Left ventricle myocardium superior (tissue), 1 donor: ENCODE measurements at regions of chr11 and their contacts with region 1.

Region 1: DNA sequence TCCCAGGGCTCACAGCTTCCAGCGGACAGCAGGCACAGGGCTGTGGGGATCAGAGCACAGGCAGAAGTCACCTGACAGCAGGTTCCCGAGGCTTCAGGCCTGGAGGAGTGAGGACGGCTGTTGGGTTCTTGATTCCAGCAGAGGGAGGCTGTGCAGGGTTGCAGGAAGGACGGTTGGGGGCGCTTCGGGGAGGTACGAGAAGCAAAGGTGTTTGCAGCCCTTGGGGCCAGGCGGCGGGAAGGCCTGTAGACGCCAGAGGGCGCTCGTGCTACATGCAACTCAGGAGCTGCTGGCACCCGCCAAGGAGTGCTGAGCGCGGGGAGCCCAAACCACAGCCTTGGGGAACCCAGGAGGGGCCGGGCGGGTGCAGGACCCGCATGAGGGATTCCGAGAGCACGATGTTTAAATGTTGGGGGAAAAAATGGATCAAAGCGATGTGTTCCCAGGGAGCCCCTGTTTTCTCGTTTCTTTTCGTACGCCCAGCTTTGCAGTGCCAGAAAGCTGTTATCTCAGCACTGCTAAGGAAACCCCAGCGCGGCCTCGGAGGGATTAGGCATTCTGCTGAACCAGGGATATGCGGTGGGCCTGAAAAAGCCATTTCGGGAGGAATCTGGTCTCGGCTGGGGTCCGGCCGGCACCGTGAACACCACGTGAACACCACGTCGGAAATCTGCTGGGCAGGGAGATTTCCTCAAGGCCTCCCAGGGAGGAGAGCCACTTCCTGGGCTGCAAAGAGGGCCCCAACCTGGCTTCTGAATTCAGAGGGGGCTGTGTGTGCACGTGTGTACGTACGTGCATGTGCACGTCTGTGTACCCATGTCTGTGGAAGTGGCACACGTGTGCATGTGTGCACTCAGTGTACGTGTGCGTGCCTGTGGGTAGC is 88.1 kb downstream of the KCNQ1 start:
- DNase-seq: peak; percentile 95
- ATAC-seq: peak; percentile 86

Region 2: GRCh38 chr11:2428322-2428795 is 104.6 kb before region 1 on chr11:
- intact Hi-C with region 1: loop called (anchors 2 kb)
- DNase-seq: peak; percentile 88
- ATAC-seq: peak; percentile 90

Region 3: DNA sequence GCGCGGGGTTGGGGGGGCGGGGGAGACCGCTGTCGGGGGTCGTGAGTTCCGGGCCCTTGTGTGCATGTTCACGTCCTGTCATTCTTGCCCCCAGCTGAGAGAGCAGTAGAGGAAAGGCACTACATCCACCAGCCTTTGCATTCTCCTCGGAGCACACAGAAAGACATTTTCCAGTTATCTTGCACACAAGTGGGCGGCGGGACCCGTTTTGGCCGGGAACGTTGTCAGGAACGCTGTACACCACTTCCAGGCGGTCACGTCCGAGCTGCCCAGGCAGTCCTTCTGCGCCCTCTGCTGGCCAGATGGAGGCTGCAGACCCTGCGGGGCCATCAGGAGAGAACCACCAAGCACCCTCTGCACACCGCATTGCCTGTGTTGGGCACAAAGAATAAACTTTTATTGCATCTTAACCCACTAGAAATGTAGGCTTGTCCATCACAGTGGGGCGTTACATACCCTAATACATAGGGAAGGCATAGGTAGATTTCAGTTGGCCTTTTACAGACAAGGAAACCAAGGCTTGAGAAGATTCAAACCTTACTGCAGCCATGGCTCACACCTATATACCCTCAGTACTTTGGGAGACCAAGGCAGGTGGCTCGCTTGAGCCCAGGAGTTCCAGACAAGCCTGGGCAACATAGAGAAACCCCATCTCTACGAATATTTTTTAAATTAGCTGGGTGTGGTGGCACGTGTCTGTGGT is 355.5 kb after region 1 on chr11:
- intact Hi-C with region 1: loop called (anchors 2 kb)
- DNase-seq: peak; percentile 96
- ATAC-seq: peak; percentile 47